ENCODE measurements at regions of chr22 and their contacts with region 1.

Region 1: GRCh38 chr22:18077639-18078328 is at the start of gene PEX26:
- DNase-seq: peak; percentile 95
- ATAC-seq: peak; percentile 99
- H3K4me3 ChIP-seq: peak within 1 kb of the TSS; percentile 87
- H3K27ac ChIP-seq: peak within 1 kb of the TSS; percentile 92
- H3K4me1 ChIP-seq: peaks cover 2% of the 10 kb centered on the region
- H3K27me3 ChIP-seq: no peaks in the 10 kb centered on the region
- CTCF ChIP-seq: no peak
- POLR2A ChIP-seq: no peak
- RAD21 ChIP-seq: peak; percentile 11; the same call in 1 of the 2 replicates
- total RNA-seq, gene PEX26: 10.6 and 12.2 TPM in 2 replicates

Region 2: GRCh38 chr22:17552737-17553136 is 525.0 kb before region 1 on chr22:
- CTCF ChIA-PET with region 1: no interaction called
- POLR2A ChIA-PET with region 1: no interaction called
- dilution Hi-C with region 1: no loop called
- in situ Hi-C with region 1: loop called (anchors 25 kb)
- intact Hi-C with region 1: loop called (anchors 10 kb)
- DNase-seq: no peak
- ATAC-seq: peak; percentile 21; the same call in 1 of the 2 replicates
- H3K4me3 ChIP-seq: no peak overlapping the region
- H3K27ac ChIP-seq: no peak overlapping the region
- H3K4me1 ChIP-seq: no peaks in the 10 kb centered on the region
- H3K27me3 ChIP-seq: peaks cover 14% of the 10 kb centered on the region
- CTCF ChIP-seq: no peak
- POLR2A ChIP-seq: no peak
- RAD21 ChIP-seq: no peak

Region 3: DNA sequence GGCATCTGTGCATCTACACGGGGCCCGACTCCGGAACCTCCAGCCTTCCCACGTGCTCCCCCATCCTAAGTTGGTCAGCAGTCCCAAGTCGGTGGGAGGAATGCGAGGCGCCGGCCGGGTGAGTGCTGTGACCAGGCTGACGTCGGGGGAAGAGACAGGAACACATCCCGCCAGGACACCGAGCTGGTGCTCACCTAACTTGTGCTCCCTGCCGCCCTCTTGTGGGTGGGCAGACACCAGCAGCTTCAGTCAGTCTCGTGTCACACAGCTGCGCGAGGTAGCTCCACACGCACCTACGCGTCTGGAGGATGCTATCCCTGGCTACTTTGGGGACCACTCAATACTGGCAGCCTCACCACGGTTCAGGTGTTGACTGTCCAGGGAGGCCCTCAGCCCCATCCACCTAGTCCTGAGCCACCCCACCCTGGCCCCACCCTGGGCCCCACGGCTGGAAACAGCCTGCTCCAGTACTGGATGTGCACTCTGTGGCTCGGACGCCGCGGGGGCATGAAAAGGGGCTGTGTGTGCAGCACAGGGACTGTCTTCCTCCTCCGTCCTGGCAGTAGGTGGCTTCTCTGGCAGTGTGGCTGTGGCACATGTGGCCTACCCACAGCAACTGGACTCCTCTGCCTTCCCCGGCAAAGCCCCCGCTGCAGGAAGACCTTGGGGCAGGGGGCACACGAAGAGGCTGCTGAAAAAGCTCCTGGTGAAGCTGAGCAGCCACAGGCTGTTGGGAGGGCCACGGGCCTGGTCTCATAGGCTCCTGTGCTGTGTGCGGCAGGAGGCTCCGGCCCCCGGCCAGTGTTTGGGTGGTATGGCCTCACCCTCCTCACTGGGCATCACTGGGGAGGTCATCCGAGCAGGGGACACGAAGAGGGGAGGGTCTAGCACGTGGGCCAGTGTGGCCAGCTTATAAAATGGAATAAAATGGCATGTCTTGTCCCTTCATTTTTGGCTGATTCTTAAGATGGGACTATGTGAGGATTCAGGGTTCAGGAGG is 292.3 kb before region 1 on chr22:
- CTCF ChIA-PET with region 1: interaction called, 10 read pairs
- POLR2A ChIA-PET with region 1: no interaction called
- dilution Hi-C with region 1: no loop called
- in situ Hi-C with region 1: no loop called
- intact Hi-C with region 1: no loop called
- DNase-seq: no peak
- ATAC-seq: no peak
- H3K4me3 ChIP-seq: no peak overlapping the region
- H3K27ac ChIP-seq: no peak overlapping the region
- H3K4me1 ChIP-seq: peaks cover 14% of the 10 kb centered on the region
- H3K27me3 ChIP-seq: no peaks in the 10 kb centered on the region
- CTCF ChIP-seq: peak; percentile 53
- POLR2A ChIP-seq: no peak
- RAD21 ChIP-seq: peak; percentile 49

Region 4: DNA sequence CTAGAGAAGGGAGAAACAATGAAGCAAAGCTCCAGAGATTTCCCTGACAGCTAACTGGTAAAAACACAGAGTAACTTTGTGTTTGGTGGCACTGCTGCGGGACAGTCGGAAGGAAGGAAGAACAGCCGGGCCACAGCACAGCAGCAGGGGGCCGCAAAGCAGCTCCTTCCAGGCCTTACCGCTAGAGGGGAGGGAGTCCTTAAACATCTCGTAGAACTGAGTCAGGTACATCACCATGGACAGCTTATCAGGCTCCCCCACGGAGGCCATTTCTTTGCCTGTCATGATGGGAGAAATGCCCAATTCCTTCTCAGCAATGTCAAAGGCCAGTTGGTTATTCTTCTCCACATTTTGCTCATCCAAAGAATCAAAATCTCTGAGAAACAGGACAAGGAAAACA is 188.9 kb before region 1 on chr22:
- CTCF ChIA-PET with region 1: interaction called, 3 read pairs
- POLR2A ChIA-PET with region 1: no interaction called
- dilution Hi-C with region 1: no loop called
- in situ Hi-C with region 1: no loop called
- intact Hi-C with region 1: loop called (anchors 2 kb)
- DNase-seq: peak; percentile 47
- ATAC-seq: no peak
- H3K4me3 ChIP-seq: no peak overlapping the region
- H3K27ac ChIP-seq: no peak overlapping the region
- H3K4me1 ChIP-seq: peaks cover 7% of the 10 kb centered on the region
- H3K27me3 ChIP-seq: no peaks in the 10 kb centered on the region
- CTCF ChIP-seq: peak; percentile 41
- POLR2A ChIP-seq: no peak
- RAD21 ChIP-seq: peak; percentile 49

Region 5: DNA sequence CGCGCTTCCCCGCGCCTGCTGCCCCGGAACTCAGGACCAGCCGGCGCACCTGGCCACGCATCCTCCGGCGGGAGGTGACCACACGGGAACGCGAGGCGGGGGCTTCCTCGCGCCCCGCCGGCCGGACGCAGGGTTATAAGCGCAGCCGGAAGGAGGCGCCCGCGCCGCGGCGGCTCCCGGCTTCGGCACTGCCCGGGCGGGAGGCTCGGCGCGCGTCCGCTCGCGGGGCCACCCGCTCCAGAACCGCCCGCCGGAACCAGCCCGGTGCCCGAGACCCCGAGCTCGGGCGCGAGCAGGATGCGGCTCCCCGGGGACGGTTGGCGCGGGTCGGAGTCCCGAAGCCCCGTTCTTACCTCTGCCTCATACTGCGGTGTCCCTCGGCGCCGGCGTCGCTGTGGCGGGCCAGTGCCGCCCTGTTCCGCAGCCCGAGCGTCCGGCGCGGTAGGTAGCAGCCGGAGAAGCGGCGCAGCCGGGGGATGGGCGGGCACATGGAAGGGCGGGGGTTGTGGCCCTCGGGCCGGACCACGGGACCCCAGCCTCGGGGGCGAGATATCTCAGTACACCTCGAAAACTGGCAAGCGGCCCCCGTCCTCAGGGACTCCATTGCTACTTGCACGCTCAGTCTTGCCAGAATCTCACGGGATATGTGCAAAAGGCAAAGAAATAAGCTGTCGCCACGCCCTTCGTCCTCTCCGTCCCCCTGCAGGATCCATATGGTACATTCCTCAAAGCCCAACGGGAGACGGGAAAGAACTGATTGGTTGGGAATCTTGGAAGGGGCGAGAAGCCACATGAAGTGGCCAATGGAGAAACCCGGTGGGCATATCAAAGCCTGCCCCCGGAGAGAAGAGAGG is 76.5 kb before region 1 on chr22:
- CTCF ChIA-PET with region 1: interaction called, 14 read pairs
- POLR2A ChIA-PET with region 1: no interaction called
- dilution Hi-C with region 1: no loop called
- in situ Hi-C with region 1: no loop called
- intact Hi-C with region 1: loop called (anchors 1 kb)
- DNase-seq: peak; percentile 99
- ATAC-seq: peak; percentile 96
- H3K4me3 ChIP-seq: peak overlapping the region; percentile 86
- H3K27ac ChIP-seq: peak overlapping the region; percentile 97
- H3K4me1 ChIP-seq: peaks cover 9% of the 10 kb centered on the region
- H3K27me3 ChIP-seq: no peaks in the 10 kb centered on the region
- CTCF ChIP-seq: peak; percentile 73
- POLR2A ChIP-seq: peak; percentile 81
- RAD21 ChIP-seq: peak; percentile 72

Region 6: GRCh38 chr22:18031695-18032454 is 45.9 kb before region 1 on chr22:
- CTCF ChIA-PET with region 1: interaction called, 16 read pairs
- POLR2A ChIA-PET with region 1: no interaction called
- dilution Hi-C with region 1: no loop called
- in situ Hi-C with region 1: no loop called
- intact Hi-C with region 1: no loop called
- DNase-seq: peak; percentile 97
- ATAC-seq: peak; percentile 84
- H3K4me3 ChIP-seq: no peak overlapping the region
- H3K27ac ChIP-seq: peak overlapping the region; percentile 56
- H3K4me1 ChIP-seq: peaks cover 13% of the 10 kb centered on the region
- H3K27me3 ChIP-seq: no peaks in the 10 kb centered on the region
- CTCF ChIP-seq: no peak
- POLR2A ChIP-seq: no peak
- RAD21 ChIP-seq: no peak